CD4-positive, alpha-beta T cell (primary cell): ENCODE measurements at regions of chr18 and their contacts with region 1.

Region 1: GRCh38 chr18:27585601-27586173 is 400.6 kb upstream of the CHST9 start:
- DNase-seq: no peak
- ATAC-seq: no peak
- H3K4me3 ChIP-seq: no peak overlapping the region
- H3K4me3 Mint-ChIP-seq: no peak overlapping the region
- H3K27ac ChIP-seq: no peak overlapping the region
- H3K27ac Mint-ChIP-seq: no peak overlapping the region
- H3K4me1 ChIP-seq: no peaks in the 10 kb centered on the region
- H3K4me1 Mint-ChIP-seq: no peaks in the 10 kb centered on the region
- H3K27me3 ChIP-seq: no peaks in the 10 kb centered on the region
- H3K27me3 Mint-ChIP-seq: no peaks in the 10 kb centered on the region
- CTCF ChIP-seq: no peak

Region 2: GRCh38 chr18:27130065-27130630 is 455.5 kb before region 1 on chr18:
- CTCF ChIA-PET with region 1: no interaction called
- POLR2A ChIA-PET with region 1: no interaction called
- intact Hi-C with region 1: loop called in 1 of 2 experiments (anchors 5 kb)
- DNase-seq: no peak
- ATAC-seq: no peak
- H3K4me3 ChIP-seq: no peak overlapping the region
- H3K4me3 Mint-ChIP-seq: no peak overlapping the region
- H3K27ac ChIP-seq: no peak overlapping the region
- H3K27ac Mint-ChIP-seq: no peak overlapping the region
- H3K4me1 ChIP-seq: no peaks in the 10 kb centered on the region
- H3K4me1 Mint-ChIP-seq: no peaks in the 10 kb centered on the region
- H3K27me3 ChIP-seq: no peaks in the 10 kb centered on the region
- H3K27me3 Mint-ChIP-seq: no peaks in the 10 kb centered on the region
- CTCF ChIP-seq: no peak

Region 3: DNA sequence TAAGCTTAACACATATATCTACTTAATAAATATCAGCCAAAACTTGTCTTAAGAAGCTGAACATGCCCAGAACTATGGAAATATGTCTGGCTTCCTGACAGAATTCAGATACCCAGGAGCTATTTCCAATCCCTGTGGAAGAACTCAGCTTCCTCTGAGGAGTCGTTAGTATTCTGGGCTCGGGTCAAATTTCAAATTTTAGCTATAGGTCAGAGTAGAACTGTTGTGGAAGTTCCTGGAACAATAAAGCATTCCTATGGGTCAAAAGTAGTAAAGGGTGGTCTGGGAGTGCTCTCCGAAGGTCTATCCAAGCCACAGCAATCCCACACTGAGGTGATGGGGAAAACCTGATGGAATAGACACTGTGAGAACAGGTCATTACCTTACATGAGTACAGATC is 57.8 kb before region 1 on chr18:
- CTCF ChIA-PET with region 1: no interaction called
- POLR2A ChIA-PET with region 1: no interaction called
- intact Hi-C with region 1: no loop called
- DNase-seq: no peak
- ATAC-seq: no peak
- H3K4me3 ChIP-seq: no peak overlapping the region
- H3K4me3 Mint-ChIP-seq: no peak overlapping the region
- H3K27ac ChIP-seq: no peak overlapping the region
- H3K27ac Mint-ChIP-seq: no peak overlapping the region
- H3K4me1 ChIP-seq: no peaks in the 10 kb centered on the region
- H3K4me1 Mint-ChIP-seq: no peaks in the 10 kb centered on the region
- H3K27me3 ChIP-seq: no peaks in the 10 kb centered on the region
- H3K27me3 Mint-ChIP-seq: no peaks in the 10 kb centered on the region
- CTCF ChIP-seq: no peak

Region 4: GRCh38 chr18:27967913-27968824 is 382.5 kb after region 1 on chr18:
- CTCF ChIA-PET with region 1: no interaction called
- POLR2A ChIA-PET with region 1: no interaction called
- intact Hi-C with region 1: no loop called
- DNase-seq: no peak
- ATAC-seq: no peak
- H3K4me3 ChIP-seq: no peak overlapping the region
- H3K4me3 Mint-ChIP-seq: no peak overlapping the region
- H3K27ac ChIP-seq: no peak overlapping the region
- H3K27ac Mint-ChIP-seq: no peak overlapping the region
- H3K4me1 ChIP-seq: no peaks in the 10 kb centered on the region
- H3K4me1 Mint-ChIP-seq: no peaks in the 10 kb centered on the region
- H3K27me3 ChIP-seq: no peaks in the 10 kb centered on the region
- H3K27me3 Mint-ChIP-seq: no peaks in the 10 kb centered on the region
- CTCF ChIP-seq: no peak